T-cell (primary cell): ENCODE measurements at regions of chr19 and their contacts with region 1.

Region 1: DNA sequence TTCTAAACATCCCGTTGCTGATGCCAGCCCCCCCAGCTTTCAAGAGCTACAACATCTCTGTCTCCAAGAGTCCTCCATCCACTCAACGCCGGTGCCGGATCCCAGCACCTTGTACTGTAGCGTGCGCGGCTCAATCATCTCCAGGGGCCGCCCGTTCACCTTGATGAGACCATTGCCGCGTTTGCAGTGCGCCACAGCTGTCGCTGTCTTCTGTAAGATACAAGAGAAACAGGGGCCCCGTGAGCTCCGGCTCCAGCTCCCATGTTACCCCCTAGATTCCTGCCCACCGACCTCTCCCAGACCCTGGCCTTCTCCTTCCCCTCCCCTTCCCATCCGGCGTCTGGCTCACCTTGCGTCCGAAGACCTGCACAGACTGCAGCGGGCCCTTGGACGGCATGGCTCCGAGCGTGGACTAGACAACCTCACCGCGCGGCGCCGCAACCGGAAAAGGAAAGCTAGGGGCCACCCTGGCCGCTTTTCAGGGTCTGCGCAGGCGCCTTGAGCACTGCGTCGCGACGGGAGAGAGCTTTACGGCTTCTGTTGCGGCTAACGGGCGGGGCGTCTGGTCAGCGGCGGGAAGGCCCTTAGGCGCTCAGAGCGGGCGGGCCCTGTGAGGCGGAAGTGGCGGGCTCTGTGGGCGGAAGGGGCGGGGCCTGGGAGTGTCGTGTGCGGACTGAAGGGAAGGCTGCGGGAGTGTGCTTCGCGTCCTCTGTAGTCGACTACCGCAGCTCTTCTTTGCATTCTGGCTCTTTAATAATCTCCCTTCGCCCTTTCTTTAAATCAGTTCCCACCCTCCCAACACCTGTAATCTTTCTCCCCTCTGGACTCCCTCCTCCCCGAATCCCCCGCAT is at the start of gene RPS16:
- DNase-seq: peak; percentile 97 to 99 (median 98)
- ATAC-seq: peak; percentile 95 to 97 (median 96)
- H3K4me3 ChIP-seq: peak within 1 kb of the TSS; percentile 67 to 75
- H3K4me3 Mint-ChIP-seq: peak within 1 kb of the TSS; percentile 98 to 99 (median 99)
- H3K27ac ChIP-seq: peak within 1 kb of the TSS; percentile 85
- H3K27ac Mint-ChIP-seq: peak within 1 kb of the TSS; percentile 98 to 100
- H3K4me1 ChIP-seq: peaks cover 15 to 37% of the 10 kb centered on the region in 2 experiments
- H3K4me1 Mint-ChIP-seq: peaks cover 43 to 54% (median 50%) of the 10 kb centered on the region in 3 donors
- H3K27me3 ChIP-seq: no peaks in the 10 kb centered on the region
- H3K27me3 Mint-ChIP-seq: no peaks in the 10 kb centered on the region
- total RNA-seq, gene RPS16: 3,669 to 4,521 (median 4,268) TPM

Region 2: GRCh38 chr19:37779127-37780005 is 1656.4 kb before region 1 on chr19 and contains the start of gene ZNF573:
- CTCF ChIA-PET with region 1: no interaction called
- POLR2A ChIA-PET with region 1: interaction called in 1 of 2 experiments, 10 read pairs
- DNase-seq: peak; percentile 70 to 98 (median 91)
- ATAC-seq: peak; percentile 89 to 91 (median 90)
- H3K4me3 ChIP-seq: peak within 1 kb of the TSS; percentile 60 to 74
- H3K4me3 Mint-ChIP-seq: peak within 1 kb of the TSS; percentile 89 to 93 (median 90)
- H3K27ac ChIP-seq: peak within 1 kb of the TSS; percentile 97
- H3K27ac Mint-ChIP-seq: peak within 1 kb of the TSS; percentile 92 to 93
- H3K4me1 ChIP-seq: peaks cover 12 to 17% of the 10 kb centered on the region in 2 experiments
- H3K4me1 Mint-ChIP-seq: peaks cover 31 to 44% (median 43%) of the 10 kb centered on the region in 3 donors
- H3K27me3 ChIP-seq: no peaks in the 10 kb centered on the region
- H3K27me3 Mint-ChIP-seq: no peaks in the 10 kb centered on the region
- total RNA-seq, gene ZNF573: 18.6 to 24.8 (median 23.8) TPM

Region 3: GRCh38 chr19:39341719-39342604 is 93.8 kb before region 1 on chr19 and contains the start of gene SAMD4B:
- CTCF ChIA-PET with region 1: interaction called in 1 of 2 experiments, 5 read pairs
- POLR2A ChIA-PET with region 1: interaction called in 1 of 2 experiments, 23 read pairs
- DNase-seq: peak; percentile 96 to 100 (median 99)
- ATAC-seq: peak; percentile 87 to 92 (median 88)
- H3K4me3 ChIP-seq: peak within 1 kb of the TSS; percentile 95 to 99
- H3K4me3 Mint-ChIP-seq: peak within 1 kb of the TSS; percentile 90 to 98 (median 95)
- H3K27ac ChIP-seq: peak within 1 kb of the TSS; percentile 83
- H3K27ac Mint-ChIP-seq: peak within 1 kb of the TSS; percentile 92 to 98
- H3K4me1 ChIP-seq: peaks cover 13 to 58% of the 10 kb centered on the region in 2 experiments
- H3K4me1 Mint-ChIP-seq: peaks cover 73 to 79% (median 76%) of the 10 kb centered on the region in 3 donors
- H3K27me3 ChIP-seq: no peaks in the 10 kb centered on the region
- H3K27me3 Mint-ChIP-seq: no peaks in the 10 kb centered on the region
- total RNA-seq, gene SAMD4B: 59.4 to 72.3 (median 62.0) TPM

Region 4: DNA sequence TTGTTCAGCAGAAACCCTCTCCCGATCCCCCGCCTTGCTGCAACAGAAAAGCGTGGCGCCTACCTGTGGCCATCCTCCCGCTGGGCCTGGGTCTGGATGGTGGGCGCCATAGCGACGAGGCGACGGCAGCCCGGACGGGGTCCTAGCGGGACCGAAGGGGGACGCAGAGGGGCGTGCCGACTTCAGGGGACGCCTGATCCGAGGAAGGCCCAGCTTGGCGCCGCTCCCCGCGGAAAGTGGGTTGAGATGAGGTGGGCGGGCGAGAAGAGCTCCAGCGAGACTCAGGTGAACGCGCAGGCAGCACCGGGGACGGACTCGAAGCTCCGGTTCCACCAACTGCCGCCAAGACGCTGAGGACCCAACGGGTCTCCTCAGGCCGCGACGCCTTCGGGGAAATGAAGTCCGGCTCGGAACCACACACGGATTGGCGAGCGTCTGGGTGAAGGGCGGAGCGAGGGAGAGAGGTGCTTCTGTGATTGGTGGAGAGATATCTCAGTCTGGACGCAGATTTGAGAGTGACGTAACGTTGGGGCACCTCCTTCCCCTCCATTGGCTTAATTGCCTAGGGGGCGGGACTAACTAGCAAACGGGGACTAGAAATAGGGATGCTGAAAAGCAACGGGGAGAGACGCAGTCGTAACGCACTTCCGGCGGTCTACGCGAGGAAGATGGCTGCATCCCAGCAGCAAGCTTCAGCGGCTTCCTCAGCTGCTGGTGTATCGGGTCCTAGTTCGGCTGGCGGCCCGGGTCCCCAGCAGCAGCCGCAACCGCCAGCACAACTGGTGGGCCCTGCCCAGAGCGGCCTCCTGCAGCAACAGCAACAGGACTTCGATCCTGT is 44.8 kb before region 1 on chr19 and contains the starts of genes MED29 and PAF1:
- CTCF ChIA-PET with region 1: interaction called in 1 of 2 experiments, 3 read pairs
- POLR2A ChIA-PET with region 1: interaction called, 12 to 31 read pairs
- DNase-seq: peak; percentile 85 to 99 (median 97)
- ATAC-seq: peak; percentile 90 to 96 (median 95)
- H3K4me3 ChIP-seq: peak within 1 kb of the TSS; percentile 89 to 99
- H3K4me3 Mint-ChIP-seq: peak within 1 kb of the TSS; percentile 94 to 98 (median 98)
- H3K27ac ChIP-seq: peak within 1 kb of the TSS; percentile 98
- H3K27ac Mint-ChIP-seq: peak within 1 kb of the TSS; percentile 97 to 100
- H3K4me1 ChIP-seq: peaks cover 7 to 37% of the 10 kb centered on the region in 2 experiments
- H3K4me1 Mint-ChIP-seq: peaks cover 37 to 51% (median 48%) of the 10 kb centered on the region in 3 donors
- H3K27me3 ChIP-seq: no peaks in the 10 kb centered on the region
- H3K27me3 Mint-ChIP-seq: no peaks in the 10 kb centered on the region
- total RNA-seq, gene MED29: 42.0 to 48.7 (median 47.0) TPM
- total RNA-seq, gene PAF1: 43.0 to 96.1 (median 45.9) TPM

Region 5: DNA sequence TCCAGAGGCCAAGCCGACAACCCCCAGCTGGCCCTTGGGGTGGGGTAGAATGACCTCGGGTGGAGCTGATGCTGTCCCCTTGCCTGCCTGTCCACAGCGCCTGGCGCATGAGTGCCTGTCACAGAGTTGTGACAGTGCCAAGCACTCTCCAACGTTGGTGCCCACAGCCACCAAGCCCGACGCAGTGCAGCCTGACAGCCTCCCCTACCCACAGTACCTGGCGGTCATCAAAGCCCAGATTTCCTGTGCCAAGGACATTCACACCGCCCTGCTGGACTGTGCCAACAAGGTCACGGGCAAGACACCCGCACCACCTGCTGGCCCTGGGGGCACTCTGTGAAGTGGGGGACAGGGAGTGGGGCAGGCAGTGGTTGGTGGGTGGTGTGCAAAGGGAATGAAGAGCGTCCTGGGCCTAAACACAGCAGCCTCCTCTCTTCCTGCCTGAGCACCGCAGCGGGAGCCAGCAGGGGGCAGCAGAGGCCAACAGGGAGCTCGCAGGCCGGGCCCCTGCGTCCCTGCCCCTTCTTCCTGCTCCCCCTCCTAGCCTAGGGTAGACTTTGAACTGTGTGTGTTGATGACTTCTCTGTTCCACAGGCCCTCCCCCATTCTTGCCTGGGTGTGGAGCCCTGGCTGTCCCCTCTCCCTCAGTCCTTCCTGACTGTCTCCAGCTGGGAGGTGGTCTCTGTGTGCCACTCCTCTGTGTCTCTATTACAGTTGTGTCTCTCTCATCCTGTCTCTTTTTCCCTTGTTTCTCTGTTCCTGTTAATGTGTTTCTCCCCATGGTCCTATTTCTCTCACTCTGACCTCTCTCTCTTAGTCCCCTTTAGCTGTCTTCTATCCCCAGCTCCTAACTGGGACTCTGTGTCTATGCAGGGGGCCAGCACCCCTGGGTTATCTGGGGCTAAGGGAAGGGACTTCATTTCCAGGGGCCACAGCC is 38.1 kb before region 1 on chr19:
- CTCF ChIA-PET with region 1: interaction called in 1 of 2 experiments, 11 read pairs
- POLR2A ChIA-PET with region 1: interaction called, 4 to 12 read pairs
- DNase-seq: peak; percentile 81 to 97 (median 92)
- ATAC-seq: peak; percentile 54 to 66 (median 62)
- H3K4me3 ChIP-seq: peak overlapping the region in 1 of 2 donors; percentile 0
- H3K4me3 Mint-ChIP-seq: peak overlapping the region; percentile 57 to 71 (median 69)
- H3K27ac ChIP-seq: peak overlapping the region; percentile 79
- H3K27ac Mint-ChIP-seq: peak overlapping the region; percentile 92 to 95
- H3K4me1 ChIP-seq: peaks cover 24 to 64% of the 10 kb centered on the region in 2 experiments
- H3K4me1 Mint-ChIP-seq: peaks cover 64 to 66% (median 65%) of the 10 kb centered on the region in 3 donors
- H3K27me3 ChIP-seq: no peaks in the 10 kb centered on the region
- H3K27me3 Mint-ChIP-seq: no peaks in the 10 kb centered on the region

Region 6: GRCh38 chr19:39412100-39412866 is 23.4 kb before region 1 on chr19 and contains the start of gene PLEKHG2:
- CTCF ChIA-PET with region 1: interaction called in 1 of 2 experiments, 11 read pairs
- POLR2A ChIA-PET with region 1: interaction called, 3 to 9 read pairs
- DNase-seq: peak; percentile 92 to 99 (median 96)
- ATAC-seq: peak; percentile 64 to 73 (median 65)
- H3K4me3 ChIP-seq: peak within 1 kb of the TSS; percentile 96 to 97
- H3K4me3 Mint-ChIP-seq: peak within 1 kb of the TSS; percentile 79 to 85 (median 83)
- H3K27ac ChIP-seq: peak within 1 kb of the TSS; percentile 100
- H3K27ac Mint-ChIP-seq: peak within 1 kb of the TSS; percentile 93 to 94
- H3K4me1 ChIP-seq: peaks cover 14 to 59% of the 10 kb centered on the region in 2 experiments
- H3K4me1 Mint-ChIP-seq: peaks cover 38 to 64% (median 44%) of the 10 kb centered on the region in 3 donors
- H3K27me3 ChIP-seq: no peaks in the 10 kb centered on the region
- H3K27me3 Mint-ChIP-seq: peaks cover 0 to 3% of the 10 kb centered on the region in 2 donors
- total RNA-seq, gene PLEKHG2: 25.2 to 88.1 (median 36.7) TPM

Region 7: DNA sequence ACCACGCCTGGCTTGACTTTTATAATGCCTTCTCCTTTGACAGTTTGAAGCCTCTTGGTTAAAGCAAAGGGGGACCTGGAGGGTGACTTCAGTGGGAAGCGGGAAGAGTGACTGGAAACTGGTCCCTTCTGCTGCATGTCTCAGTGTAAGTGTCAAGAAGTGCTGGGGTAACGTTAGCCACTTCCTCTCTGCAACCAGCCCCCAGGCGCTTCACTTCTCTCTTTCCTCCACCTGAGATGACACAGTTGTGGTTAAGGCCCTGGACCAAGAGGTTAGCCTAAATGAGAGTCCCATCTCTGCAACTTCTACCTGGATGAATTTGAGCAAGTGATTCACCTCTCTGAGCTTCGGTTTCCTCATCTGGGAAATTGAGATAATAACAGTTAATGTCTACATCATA is 359.3 kb after region 1 on chr19:
- CTCF ChIA-PET with region 1: no interaction called
- POLR2A ChIA-PET with region 1: no interaction called
- DNase-seq: no peak
- ATAC-seq: no peak
- H3K4me3 ChIP-seq: no peak overlapping the region
- H3K4me3 Mint-ChIP-seq: no peak overlapping the region
- H3K27ac ChIP-seq: no peak overlapping the region
- H3K27ac Mint-ChIP-seq: no peak overlapping the region
- H3K4me1 ChIP-seq: peaks cover 0 to 10% of the 10 kb centered on the region in 2 experiments
- H3K4me1 Mint-ChIP-seq: peaks cover 0 to 4% (median 0%) of the 10 kb centered on the region in 3 donors
- H3K27me3 ChIP-seq: no peaks in the 10 kb centered on the region
- H3K27me3 Mint-ChIP-seq: peaks cover 0 to 1% of the 10 kb centered on the region in 2 donors